MCF 10A (cell line): ENCODE measurements at regions of chr2 and their contacts with region 1.

Region 1: DNA sequence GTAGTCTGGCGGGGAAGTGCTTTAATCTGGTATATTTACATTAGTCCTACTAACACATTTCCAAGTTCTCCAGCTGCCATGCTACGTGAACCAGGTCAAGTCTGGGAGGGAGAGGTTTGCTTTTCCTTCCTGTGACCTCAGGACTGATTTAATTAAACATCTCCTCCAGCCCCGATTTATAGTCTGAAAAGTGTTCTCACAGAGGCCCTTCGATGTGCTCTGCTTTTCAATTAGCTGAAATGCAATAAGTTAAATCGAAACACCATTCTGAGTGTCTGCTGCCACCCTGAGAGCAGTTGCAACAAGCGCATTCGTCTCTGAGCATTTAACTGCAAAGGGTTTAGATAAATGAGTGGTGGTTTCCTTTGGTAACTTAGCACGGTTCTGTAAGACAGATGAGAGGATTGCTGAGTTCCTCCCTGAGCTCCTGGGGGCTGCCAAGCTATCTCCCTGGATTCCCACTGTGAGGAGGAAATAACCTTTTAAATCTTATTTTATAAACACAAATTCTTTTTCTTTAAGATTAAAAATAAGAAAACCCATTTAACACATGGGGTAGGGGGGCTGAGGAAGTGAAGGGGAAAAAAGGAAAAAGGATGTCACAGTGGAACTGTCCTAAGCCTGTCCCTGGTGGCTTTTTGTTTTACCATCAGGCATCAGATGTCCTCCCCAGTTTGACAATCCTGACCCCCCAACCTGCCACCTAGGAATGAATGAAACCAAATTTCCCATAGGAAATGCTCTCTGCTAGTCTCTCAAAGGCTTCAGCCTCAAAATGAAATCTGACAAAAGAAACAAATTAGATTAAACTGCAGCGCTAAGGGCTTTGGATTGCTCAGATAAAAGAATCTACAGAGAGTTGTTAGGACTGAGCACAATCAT is 56.5 kb upstream of the CREB1 start:
- DNase-seq: peak; percentile 77
- H3K4me3 Mint-ChIP-seq: no peak overlapping the region
- H3K27ac Mint-ChIP-seq: peak overlapping the region; percentile 39
- H3K4me1 Mint-ChIP-seq: peaks cover 8% of the 10 kb centered on the region
- H3K27me3 Mint-ChIP-seq: no peaks in the 10 kb centered on the region
- CTCF ChIP-seq: peak; percentile 71

Region 2: GRCh38 chr2:206693399-206694137 is 779.7 kb before region 1 on chr2:
- CTCF ChIA-PET with region 1: interaction called, 10 read pairs
- POLR2A ChIA-PET with region 1: no interaction called
- intact Hi-C with region 1: loop called (anchors 1 kb)
- DNase-seq: peak; percentile 73
- H3K4me3 Mint-ChIP-seq: no peak overlapping the region
- H3K27ac Mint-ChIP-seq: no peak overlapping the region
- H3K4me1 Mint-ChIP-seq: no peaks in the 10 kb centered on the region
- H3K27me3 Mint-ChIP-seq: no peaks in the 10 kb centered on the region
- CTCF ChIP-seq: peak; percentile 70

Region 3: GRCh38 chr2:206920951-206921350 is 552.3 kb before region 1 on chr2:
- CTCF ChIA-PET with region 1: no interaction called
- POLR2A ChIA-PET with region 1: no interaction called
- intact Hi-C with region 1: no loop called
- DNase-seq: no peak
- H3K4me3 Mint-ChIP-seq: no peak overlapping the region
- H3K27ac Mint-ChIP-seq: no peak overlapping the region
- H3K4me1 Mint-ChIP-seq: peaks cover 6% of the 10 kb centered on the region
- H3K27me3 Mint-ChIP-seq: no peaks in the 10 kb centered on the region
- CTCF ChIP-seq: no peak

Region 4: GRCh38 chr2:206981739-206982340 is 491.4 kb before region 1 on chr2:
- CTCF ChIA-PET with region 1: interaction called, 134 read pairs
- POLR2A ChIA-PET with region 1: interaction called, 6 read pairs
- intact Hi-C with region 1: loop called (anchors 1 kb)
- DNase-seq: peak; percentile 76
- H3K4me3 Mint-ChIP-seq: no peak overlapping the region
- H3K27ac Mint-ChIP-seq: no peak overlapping the region
- H3K4me1 Mint-ChIP-seq: peaks cover 22% of the 10 kb centered on the region
- H3K27me3 Mint-ChIP-seq: no peaks in the 10 kb centered on the region
- CTCF ChIP-seq: peak; percentile 88

Region 5: DNA sequence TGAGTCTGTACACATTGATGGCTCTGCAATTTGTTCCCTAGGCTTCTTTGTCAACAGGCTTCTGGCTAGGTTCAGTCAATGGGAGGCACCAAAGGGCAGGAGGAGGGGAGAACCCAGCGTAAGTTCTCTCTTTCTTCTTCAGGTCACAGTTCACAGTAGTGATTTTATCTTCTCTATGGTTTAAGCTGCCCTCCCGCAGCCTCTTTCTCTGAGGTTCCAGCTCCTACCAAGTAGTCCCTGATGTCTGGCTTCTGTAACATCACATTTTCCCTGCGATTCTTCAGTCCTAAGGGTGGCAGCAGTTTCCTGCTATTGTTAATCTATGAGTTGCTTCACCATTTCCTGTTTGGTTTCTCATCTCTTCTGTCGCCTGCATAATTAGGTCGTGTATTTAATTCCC is 426.6 kb before region 1 on chr2:
- CTCF ChIA-PET with region 1: interaction called, 3 read pairs
- POLR2A ChIA-PET with region 1: no interaction called
- intact Hi-C with region 1: loop called (anchors 1 kb)
- DNase-seq: peak; percentile 41
- H3K4me3 Mint-ChIP-seq: no peak overlapping the region
- H3K27ac Mint-ChIP-seq: no peak overlapping the region
- H3K4me1 Mint-ChIP-seq: peaks cover 6% of the 10 kb centered on the region
- H3K27me3 Mint-ChIP-seq: peaks cover 10% of the 10 kb centered on the region
- CTCF ChIP-seq: no peak

Region 6: GRCh38 chr2:207258263-207258991 is 214.9 kb before region 1 on chr2:
- CTCF ChIA-PET with region 1: interaction called, 6 read pairs
- POLR2A ChIA-PET with region 1: interaction called, 3 read pairs
- intact Hi-C with region 1: loop called (anchors 1 kb)
- DNase-seq: peak; percentile 91
- H3K4me3 Mint-ChIP-seq: peak overlapping the region; percentile 26
- H3K27ac Mint-ChIP-seq: peak overlapping the region; percentile 84
- H3K4me1 Mint-ChIP-seq: peaks cover 65% of the 10 kb centered on the region
- H3K27me3 Mint-ChIP-seq: no peaks in the 10 kb centered on the region
- CTCF ChIP-seq: no peak

Region 7: DNA sequence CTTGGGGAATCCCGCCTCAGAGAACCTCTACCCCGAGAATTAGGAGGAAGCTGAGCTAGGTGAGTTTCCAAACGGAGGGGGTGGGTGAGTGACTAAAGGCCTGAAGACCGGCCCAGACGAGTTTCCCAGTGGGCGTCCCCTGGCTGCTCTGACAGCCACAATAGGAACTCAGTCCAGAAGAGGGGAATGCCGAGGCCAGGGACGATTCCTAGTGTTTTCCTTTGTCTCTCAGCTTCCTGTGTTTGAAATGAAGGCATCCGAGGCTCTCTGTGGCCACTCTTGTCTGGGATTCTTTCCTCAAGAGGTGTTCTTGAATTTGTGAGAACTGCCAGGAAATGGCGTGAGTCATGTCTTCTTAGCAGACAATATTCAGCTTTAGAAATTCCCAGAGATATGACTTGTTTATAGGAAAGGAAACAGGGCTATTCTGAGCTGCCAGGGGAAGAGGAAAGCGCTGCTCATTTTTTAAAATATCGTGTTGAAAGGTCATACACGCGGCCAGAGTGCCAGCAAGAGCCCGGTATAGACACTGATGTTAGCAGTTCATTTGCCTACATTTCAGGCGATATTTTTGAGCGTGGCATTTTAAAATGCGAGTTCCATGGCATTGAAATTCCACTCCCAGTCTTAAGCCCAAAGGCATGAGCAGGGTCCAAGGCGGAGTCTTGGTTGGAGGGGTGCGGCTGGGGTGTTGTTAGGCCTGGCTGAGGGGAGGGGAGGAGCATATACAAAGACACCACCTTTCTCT is 138.5 kb before region 1 on chr2:
- CTCF ChIA-PET with region 1: interaction called, 4 read pairs
- POLR2A ChIA-PET with region 1: interaction called, 7 read pairs
- intact Hi-C with region 1: loop called (anchors 1 kb)
- DNase-seq: peak; percentile 97
- H3K4me3 Mint-ChIP-seq: peak overlapping the region; percentile 70
- H3K27ac Mint-ChIP-seq: peak overlapping the region; percentile 98
- H3K4me1 Mint-ChIP-seq: peaks cover 58% of the 10 kb centered on the region
- H3K27me3 Mint-ChIP-seq: no peaks in the 10 kb centered on the region
- CTCF ChIP-seq: no peak

Region 8: GRCh38 chr2:207546822-207547221 is 73.5 kb after region 1 on chr2:
- CTCF ChIA-PET with region 1: no interaction called
- POLR2A ChIA-PET with region 1: no interaction called
- intact Hi-C with region 1: no loop called
- DNase-seq: peak; percentile 16
- H3K4me3 Mint-ChIP-seq: no peak overlapping the region
- H3K27ac Mint-ChIP-seq: no peak overlapping the region
- H3K4me1 Mint-ChIP-seq: peaks cover 16% of the 10 kb centered on the region
- H3K27me3 Mint-ChIP-seq: no peaks in the 10 kb centered on the region
- CTCF ChIP-seq: no peak